BJ (cell line): ENCODE measurements at regions of chr17 and their contacts with region 1.

Region 1: GRCh38 chr17:40531051-40531991 is 29.9 kb upstream of the TNS4 start:
- DNase-seq: no peak
- H3K4me3 ChIP-seq: no peak overlapping the region
- H3K27me3 ChIP-seq: no peaks in the 10 kb centered on the region
- CTCF ChIP-seq: no peak

Region 2: DNA sequence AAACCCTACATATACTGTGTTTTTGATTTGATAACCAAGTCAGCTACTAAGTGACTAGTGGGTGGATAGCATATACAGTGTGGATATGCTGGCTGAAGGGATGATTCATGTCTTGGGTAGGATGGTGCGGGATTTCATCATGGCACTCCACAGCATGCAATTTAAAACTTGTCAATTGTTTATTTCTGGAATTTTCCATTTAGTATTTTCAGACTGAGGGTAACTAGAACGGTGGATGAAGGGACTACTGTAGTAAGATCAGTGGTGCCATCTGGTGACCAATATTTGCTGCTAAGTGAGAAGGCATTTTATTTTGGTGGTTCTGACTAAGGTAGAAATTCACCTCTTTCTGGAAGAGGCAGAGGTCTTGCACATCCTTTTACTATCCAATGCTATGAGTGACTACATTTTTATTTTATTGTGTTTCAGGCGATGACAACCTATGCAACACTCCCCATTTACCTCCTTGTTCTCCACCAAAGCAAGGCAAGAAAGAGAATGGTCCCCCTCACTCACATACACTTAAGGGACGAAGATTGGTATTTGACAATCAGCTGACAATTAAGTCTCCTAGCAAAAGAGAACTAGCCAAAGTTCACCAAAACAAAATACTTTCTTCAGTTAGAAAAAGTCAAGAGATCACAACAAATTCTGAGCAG is 240.6 kb before region 1 on chr17:
- CTCF ChIA-PET with region 1: interaction called, 3 read pairs
- POLR2A ChIA-PET with region 1: interaction called, 16 read pairs
- DNase-seq: peak; percentile 81
- H3K4me3 ChIP-seq: no peak overlapping the region
- H3K27me3 ChIP-seq: no peaks in the 10 kb centered on the region
- CTCF ChIP-seq: peak; percentile 67

Region 3: GRCh38 chr17:40417609-40418427 is 113.5 kb before region 1 on chr17 and contains the start of gene TOP2A:
- CTCF ChIA-PET with region 1: interaction called, 23 read pairs
- POLR2A ChIA-PET with region 1: no interaction called
- DNase-seq: peak; percentile 99
- H3K4me3 ChIP-seq: peak within 1 kb of the TSS; percentile 56
- H3K27me3 ChIP-seq: no peaks in the 10 kb centered on the region
- CTCF ChIP-seq: no peak
- polyA plus RNA-seq, gene TOP2A: 31.8 and 69.6 TPM in 2 replicates

Region 4: DNA sequence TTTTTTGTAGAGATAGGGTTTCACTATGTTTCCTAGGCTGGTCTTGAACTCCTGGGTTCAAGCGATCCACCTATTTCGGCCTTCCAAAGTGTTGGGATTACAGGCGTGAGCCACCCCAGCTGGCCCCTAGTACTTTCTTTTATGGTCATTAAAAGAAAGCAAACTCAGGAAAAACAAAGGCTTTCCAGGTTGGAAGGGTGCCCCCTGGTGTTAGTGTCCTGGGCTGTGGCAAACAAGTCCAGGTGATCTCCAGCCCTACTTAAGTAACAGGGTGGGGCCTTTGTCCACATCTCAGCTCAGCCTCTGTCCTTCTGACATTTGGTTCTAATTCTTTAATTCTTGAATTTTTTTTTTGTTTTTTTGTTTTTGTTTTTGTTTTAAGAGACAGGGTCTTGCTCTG is 81.1 kb before region 1 on chr17:
- CTCF ChIA-PET with region 1: interaction called, 113 read pairs
- POLR2A ChIA-PET with region 1: interaction called, 8 read pairs
- DNase-seq: no peak
- H3K4me3 ChIP-seq: no peak overlapping the region
- H3K27me3 ChIP-seq: no peaks in the 10 kb centered on the region
- CTCF ChIP-seq: peak; percentile 70

Region 5: DNA sequence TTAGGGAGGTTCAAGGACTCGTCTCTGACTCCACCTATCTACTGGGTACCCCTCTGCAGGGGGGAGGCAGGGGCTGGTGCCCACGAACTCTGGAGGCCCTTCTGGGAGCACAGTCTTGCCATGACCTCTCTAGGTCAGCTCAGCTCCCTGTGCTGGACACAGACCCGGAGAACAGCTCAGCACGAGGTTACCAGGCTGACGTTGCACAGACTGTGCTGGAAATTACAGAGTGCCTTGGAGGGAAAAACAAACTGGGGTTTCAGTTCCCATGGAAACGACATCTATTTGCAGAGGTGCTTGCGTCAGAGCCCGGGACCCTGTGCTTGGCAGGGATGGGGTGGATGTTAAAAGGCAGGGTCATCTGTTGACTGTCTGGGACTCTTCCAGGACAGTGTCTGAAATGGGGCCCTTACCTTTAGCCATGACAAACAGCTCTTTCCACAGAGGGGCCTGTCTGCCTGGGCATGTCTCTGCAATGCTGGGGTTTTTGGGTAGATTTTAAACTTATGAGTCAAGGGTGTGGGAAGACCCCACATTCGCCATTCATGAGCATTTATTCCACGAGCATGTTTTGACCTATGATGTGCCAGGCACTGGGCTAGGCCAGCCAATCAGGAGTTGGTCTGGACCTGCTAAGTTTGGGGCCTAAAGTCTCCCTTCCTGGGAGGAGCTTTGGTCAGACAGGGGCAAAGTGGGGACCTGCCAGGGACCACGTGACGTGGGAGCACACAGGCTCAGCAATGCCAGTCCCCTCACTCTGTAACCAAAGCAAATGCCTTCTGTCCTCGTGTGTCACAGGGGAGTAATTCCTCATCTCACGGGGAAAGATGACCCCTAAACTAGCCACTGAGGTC is 11.5 kb after region 1 on chr17:
- CTCF ChIA-PET with region 1: interaction called, 382 read pairs
- POLR2A ChIA-PET with region 1: interaction called, 4 read pairs
- DNase-seq: peak; percentile 84
- H3K4me3 ChIP-seq: no peak overlapping the region
- H3K27me3 ChIP-seq: no peaks in the 10 kb centered on the region
- CTCF ChIP-seq: no peak